Activated naive CD4-positive, alpha-beta T cell treated with anti-CD3 and anti-CD28 coated beads for 36 hours (primary cell): ENCODE measurements at regions of chr6 and their contacts with region 1.

Region 1: DNA sequence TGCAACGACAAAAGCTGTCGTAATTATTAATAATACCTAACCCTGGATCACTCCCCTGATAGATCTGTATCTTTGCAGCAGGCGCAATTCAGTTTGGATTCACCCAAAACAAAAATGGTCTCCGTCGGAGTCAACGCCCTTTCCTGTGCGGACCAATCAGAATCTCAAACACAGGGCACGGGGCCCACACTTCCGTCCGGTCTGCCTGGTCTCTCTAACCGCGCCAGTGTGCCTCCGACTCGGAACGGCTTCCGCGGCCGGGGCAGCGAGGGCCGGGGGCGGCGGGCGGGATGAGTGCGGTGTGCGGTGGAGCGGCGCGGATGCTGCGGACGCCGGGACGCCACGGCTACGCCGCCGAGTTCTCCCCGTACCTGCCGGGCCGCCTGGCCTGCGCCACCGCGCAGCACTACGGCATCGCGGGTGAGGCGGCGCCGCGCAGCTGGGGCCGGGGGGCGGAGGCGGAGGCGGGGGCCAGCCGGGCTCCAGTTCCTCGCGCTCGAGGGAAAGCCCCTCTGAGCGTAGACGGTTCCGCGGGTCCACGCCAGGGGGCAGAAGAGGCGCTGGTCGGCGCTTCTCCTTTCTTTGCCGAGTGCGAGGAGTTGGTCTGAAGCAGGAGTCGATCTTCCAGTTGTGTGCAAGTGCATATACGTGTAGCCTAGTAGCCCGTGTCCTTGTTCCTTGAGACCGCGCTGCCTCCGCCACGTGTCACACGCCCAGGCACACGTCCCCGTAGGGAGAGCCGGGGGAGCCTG is at the start of gene PEX7:
- DNase-seq: peak; percentile 92
- H3K4me3 Mint-ChIP-seq: peak within 1 kb of the TSS; percentile 90
- H3K27ac Mint-ChIP-seq: peak within 1 kb of the TSS; percentile 92
- H3K4me1 Mint-ChIP-seq: peaks cover 19% of the 10 kb centered on the region
- H3K27me3 Mint-ChIP-seq: no peaks in the 10 kb centered on the region
- total RNA-seq, gene PEX7: 6.0 to 6.4 TPM

Region 2: DNA sequence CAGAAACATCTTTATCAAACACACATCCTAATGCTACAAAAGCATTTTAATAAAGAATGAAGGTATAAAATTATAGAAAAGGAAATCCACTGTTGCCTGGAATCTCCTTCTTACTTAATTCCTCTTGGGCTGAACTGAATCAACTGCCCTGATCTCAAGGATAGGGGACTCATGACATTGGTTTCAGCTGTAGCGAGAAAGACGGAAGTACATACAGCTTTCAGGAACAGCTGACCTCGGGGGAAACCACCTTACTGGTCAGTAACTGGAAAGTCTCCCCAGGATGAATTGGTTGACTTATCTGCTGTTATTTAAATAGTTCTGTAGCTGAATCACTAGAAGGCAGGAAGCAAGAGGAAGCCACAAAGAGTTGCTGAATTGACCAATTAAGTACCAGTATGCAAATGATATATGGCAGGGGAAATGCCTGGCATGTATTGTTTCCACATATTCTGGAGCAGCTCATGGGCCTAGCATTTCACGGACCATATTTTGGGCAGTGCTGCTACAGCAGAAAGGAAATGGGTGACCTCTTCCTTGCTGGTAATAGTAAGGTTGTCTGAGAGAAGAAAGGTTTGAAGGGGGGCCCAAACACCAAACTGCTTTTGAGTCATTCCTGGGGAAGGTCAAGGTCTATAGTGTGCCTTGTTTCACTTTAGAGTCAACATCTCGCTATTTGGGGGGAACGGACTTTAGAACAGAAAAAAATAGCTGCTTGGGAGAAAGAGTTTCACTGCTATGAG is 228.6 kb before region 1 on chr6:
- CTCF ChIA-PET with region 1: interaction called, 3 read pairs
- intact Hi-C with region 1: loop called (anchors 1 kb)
- DNase-seq: peak; percentile 79
- H3K4me3 Mint-ChIP-seq: peak overlapping the region; percentile 27
- H3K27ac Mint-ChIP-seq: peak overlapping the region; percentile 83
- H3K4me1 Mint-ChIP-seq: peaks cover 19% of the 10 kb centered on the region
- H3K27me3 Mint-ChIP-seq: no peaks in the 10 kb centered on the region

Region 3: DNA sequence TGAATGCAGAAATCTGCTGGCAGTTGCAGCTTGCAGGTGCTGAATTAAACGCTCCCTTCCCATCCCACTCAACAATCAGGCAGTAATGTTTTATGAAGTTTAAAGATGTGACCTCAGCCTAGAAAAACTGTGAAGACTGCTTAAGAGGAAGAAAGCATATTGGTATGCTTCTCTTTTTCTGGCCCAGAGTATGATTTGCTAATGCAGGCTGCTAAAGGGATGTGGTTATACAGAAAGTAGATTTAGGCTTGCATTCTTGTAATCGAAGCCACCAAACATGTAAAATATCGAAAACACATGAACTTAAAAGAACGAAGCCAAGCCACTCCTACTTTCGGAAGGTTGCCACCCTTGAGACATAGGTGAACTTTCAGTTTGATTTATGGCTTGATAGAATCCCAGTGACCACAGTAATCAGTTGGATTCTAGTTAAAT is 71.0 kb before region 1 on chr6:
- CTCF ChIA-PET with region 1: no interaction called
- intact Hi-C with region 1: loop called (anchors 2 kb)
- DNase-seq: peak; percentile 55
- H3K4me3 Mint-ChIP-seq: peak overlapping the region; percentile 23
- H3K27ac Mint-ChIP-seq: peak overlapping the region; percentile 74
- H3K4me1 Mint-ChIP-seq: peaks cover 67% of the 10 kb centered on the region
- H3K27me3 Mint-ChIP-seq: no peaks in the 10 kb centered on the region

Region 4: DNA sequence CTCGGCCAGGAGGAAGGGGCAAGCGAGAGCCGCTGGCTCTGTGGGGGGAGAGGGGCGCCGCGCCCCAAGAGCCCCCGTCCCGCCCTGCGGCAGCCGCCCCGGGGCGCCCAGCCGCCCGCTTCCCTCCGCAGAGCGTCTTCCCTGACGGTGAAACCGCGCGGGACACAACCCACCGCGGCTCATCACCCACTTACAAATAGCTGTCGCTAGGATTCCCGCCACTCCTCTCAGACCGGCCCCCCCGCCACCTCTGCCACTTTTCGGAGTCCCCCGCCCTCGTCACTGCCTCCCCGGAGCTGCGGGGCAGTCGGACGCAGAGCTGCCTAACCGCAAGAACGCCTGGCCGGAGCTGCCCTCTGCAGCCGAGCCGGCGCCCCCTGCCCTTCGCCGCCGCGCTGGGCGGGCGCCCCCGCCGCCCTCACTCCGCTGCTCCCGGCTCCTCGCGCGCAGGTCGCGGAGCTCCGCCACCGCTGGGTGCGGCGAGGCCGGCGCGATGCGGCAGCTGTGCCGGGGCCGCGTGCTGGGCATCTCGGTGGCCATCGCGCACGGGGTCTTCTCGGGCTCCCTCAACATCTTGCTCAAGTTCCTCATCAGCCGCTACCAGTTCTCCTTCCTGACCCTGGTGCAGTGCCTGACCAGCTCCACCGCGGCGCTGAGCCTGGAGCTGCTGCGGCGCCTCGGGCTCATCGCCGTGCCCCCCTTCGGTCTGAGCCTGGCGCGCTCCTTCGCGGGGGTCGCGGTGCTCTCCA is 99.6 kb after region 1 on chr6 and contains the start of gene SLC35D3:
- CTCF ChIA-PET with region 1: interaction called, 3 read pairs
- intact Hi-C with region 1: loop called (anchors 1 kb)
- DNase-seq: peak; percentile 30
- H3K4me3 Mint-ChIP-seq: peak within 1 kb of the TSS; percentile 67
- H3K27ac Mint-ChIP-seq: no peak within 1 kb of the TSS
- H3K4me1 Mint-ChIP-seq: peaks cover 24% of the 10 kb centered on the region
- H3K27me3 Mint-ChIP-seq: peaks cover 56% of the 10 kb centered on the region
- total RNA-seq, gene SLC35D3: not detected

Region 5: GRCh38 chr6:137767911-137768690 is 945.5 kb after region 1 on chr6:
- CTCF ChIA-PET with region 1: no interaction called
- intact Hi-C with region 1: loop called (anchors 5 kb)
- DNase-seq: no peak
- H3K4me3 Mint-ChIP-seq: no peak overlapping the region
- H3K27ac Mint-ChIP-seq: peak overlapping the region; percentile 65
- H3K4me1 Mint-ChIP-seq: peaks cover 12% of the 10 kb centered on the region
- H3K27me3 Mint-ChIP-seq: no peaks in the 10 kb centered on the region